ENCODE measurements at regions of chr2 and their contacts with region 1.

Region 1: GRCh38 chr2:127064642-127065250 is 42.2 kb downstream of the BIN1 start:
- DNase-seq: peak; percentile 97
- H3K4me3 ChIP-seq: peak overlapping the region; percentile 0 to 24 (median 10)
- H3K27ac ChIP-seq: peak overlapping the region; percentile 58 to 81 (median 69)
- H3K4me1 ChIP-seq: peaks cover 36 to 61% (median 48%) of the 10 kb centered on the region in 4 donors
- H3K27me3 ChIP-seq: no peaks in the 10 kb centered on the region
- CTCF ChIP-seq: no peak
- EP300 ChIP-seq: peak; percentile 24
- POLR2A ChIP-seq: no peak

Region 2: DNA sequence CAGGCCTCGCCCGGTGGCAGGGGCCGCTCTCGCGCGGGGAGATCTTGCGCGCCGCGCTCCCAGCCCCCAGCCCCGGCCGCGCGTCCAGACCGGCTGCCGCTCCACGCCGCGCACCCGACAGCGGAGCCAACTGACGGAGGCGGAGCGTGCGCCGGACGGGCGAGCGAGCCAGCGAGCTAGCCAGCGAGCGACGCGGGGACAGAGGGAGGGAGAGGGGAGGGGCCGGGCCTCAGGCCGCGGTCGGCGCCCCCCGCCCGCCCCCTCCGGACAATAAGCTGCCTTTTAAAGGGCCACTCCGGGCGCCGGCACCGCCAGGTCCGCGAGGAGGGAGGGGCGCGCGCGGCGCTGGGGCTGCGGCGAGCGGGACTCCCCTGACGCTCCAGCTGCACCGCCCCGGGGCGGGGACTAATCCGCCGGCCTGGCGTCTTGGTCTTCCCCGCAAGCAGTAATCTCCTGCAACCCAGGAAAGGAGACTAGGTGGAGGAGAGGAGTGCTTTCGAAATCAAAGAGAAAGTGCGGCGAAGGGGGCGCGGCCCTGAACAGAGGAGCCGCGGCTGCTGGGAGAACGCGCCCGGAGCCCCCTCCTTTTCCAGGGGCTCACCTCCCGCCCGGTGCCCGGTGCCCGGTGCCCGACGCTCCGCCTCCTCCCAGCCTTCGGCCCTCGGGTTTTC is 42.3 kb after region 1 on chr2 and contains the start of gene BIN1:
- intact Hi-C with region 1: no loop called
- DNase-seq: peak; percentile 96
- H3K4me3 ChIP-seq: peak within 1 kb of the TSS; percentile 73 to 89 (median 80)
- H3K27ac ChIP-seq: peak within 1 kb of the TSS; percentile 77 to 93 (median 86)
- H3K4me1 ChIP-seq: peaks cover 16 to 54% (median 47%) of the 10 kb centered on the region in 4 donors
- H3K27me3 ChIP-seq: no peaks in the 10 kb centered on the region
- CTCF ChIP-seq: no peak
- EP300 ChIP-seq: no peak
- POLR2A ChIP-seq: peak; percentile 39
- total RNA-seq, gene BIN1: 32.4 to 78.2 (median 50.2) TPM

Region 3: DNA sequence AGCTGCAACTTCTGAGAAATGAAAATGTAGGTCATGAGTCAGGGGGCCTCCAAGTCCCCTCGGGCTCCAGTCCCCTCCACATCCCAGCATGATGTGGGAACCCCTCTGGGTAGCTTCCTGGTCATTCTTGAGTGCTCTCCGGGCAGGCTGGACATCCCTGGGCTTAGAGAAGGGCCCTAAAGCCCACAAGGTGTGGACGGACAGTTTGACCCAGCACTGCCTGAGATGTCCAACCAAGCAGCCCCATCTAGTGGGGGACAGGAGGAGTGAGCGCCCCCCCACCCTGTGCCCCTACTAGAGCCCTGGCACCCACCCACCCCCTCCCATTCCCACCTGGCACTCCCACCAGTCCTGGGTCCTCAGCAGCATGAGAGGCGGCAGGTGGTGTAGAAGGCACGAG is 109.4 kb after region 1 on chr2:
- intact Hi-C with region 1: loop called (anchors 10 kb)
- DNase-seq: no peak
- H3K4me3 ChIP-seq: no peak overlapping the region
- H3K27ac ChIP-seq: peak overlapping the region in 2 of 4 donors; percentile 69 to 83
- H3K4me1 ChIP-seq: peaks cover 19 to 48% (median 42%) of the 10 kb centered on the region in 4 donors
- H3K27me3 ChIP-seq: no peaks in the 10 kb centered on the region
- CTCF ChIP-seq: peak in 2 of 3 experiments; percentile 23 to 37
- EP300 ChIP-seq: no peak
- POLR2A ChIP-seq: no peak

Region 4: GRCh38 chr2:127279781-127280180 is 215.0 kb after region 1 on chr2:
- intact Hi-C with region 1: loop called (anchors 10 kb)
- DNase-seq: no peak
- H3K4me3 ChIP-seq: no peak overlapping the region
- H3K27ac ChIP-seq: no peak overlapping the region
- H3K4me1 ChIP-seq: no peaks in the 10 kb centered on the region
- H3K27me3 ChIP-seq: no peaks in the 10 kb centered on the region
- CTCF ChIP-seq: no peak
- EP300 ChIP-seq: no peak
- POLR2A ChIP-seq: no peak

Measured in esophagus muscularis mucosa (tissue), 4 donors.